A673 (cell line): ENCODE measurements at regions of chr4 and their contacts with region 1.

Region 1: GRCh38 chr4:163701916-163702315 is 207.4 kb downstream of the TMA16 start:
- DNase-seq: peak; percentile 93
- H3K4me3 ChIP-seq: no peak overlapping the region
- H3K27ac ChIP-seq: peak overlapping the region; percentile 78
- H3K4me1 ChIP-seq: peaks cover 56% of the 10 kb centered on the region
- H3K27me3 ChIP-seq: no peaks in the 10 kb centered on the region
- CTCF ChIP-seq: peak; percentile 34; the same call in 1 of the 2 replicates

Region 2: GRCh38 chr4:163688856-163689255 is 13.1 kb before region 1 on chr4:
- CTCF ChIA-PET with region 1: no interaction called
- POLR2A ChIA-PET with region 1: no interaction called
- intact Hi-C with region 1: no loop called
- DNase-seq: no peak
- H3K4me3 ChIP-seq: no peak overlapping the region
- H3K27ac ChIP-seq: no peak overlapping the region
- H3K4me1 ChIP-seq: peaks cover 3% of the 10 kb centered on the region
- H3K27me3 ChIP-seq: no peaks in the 10 kb centered on the region
- CTCF ChIP-seq: no peak

Region 3: GRCh38 chr4:163748449-163748848 is 46.5 kb after region 1 on chr4:
- CTCF ChIA-PET with region 1: no interaction called
- POLR2A ChIA-PET with region 1: no interaction called
- intact Hi-C with region 1: loop called (anchors 2 kb)
- DNase-seq: peak; percentile 90
- H3K4me3 ChIP-seq: no peak overlapping the region
- H3K27ac ChIP-seq: peak overlapping the region; percentile 2
- H3K4me1 ChIP-seq: peaks cover 16% of the 10 kb centered on the region
- H3K27me3 ChIP-seq: no peaks in the 10 kb centered on the region
- CTCF ChIP-seq: no peak